K562 (cell line): ENCODE measurements at regions of chr1 and their contacts with region 1.

Region 1: DNA sequence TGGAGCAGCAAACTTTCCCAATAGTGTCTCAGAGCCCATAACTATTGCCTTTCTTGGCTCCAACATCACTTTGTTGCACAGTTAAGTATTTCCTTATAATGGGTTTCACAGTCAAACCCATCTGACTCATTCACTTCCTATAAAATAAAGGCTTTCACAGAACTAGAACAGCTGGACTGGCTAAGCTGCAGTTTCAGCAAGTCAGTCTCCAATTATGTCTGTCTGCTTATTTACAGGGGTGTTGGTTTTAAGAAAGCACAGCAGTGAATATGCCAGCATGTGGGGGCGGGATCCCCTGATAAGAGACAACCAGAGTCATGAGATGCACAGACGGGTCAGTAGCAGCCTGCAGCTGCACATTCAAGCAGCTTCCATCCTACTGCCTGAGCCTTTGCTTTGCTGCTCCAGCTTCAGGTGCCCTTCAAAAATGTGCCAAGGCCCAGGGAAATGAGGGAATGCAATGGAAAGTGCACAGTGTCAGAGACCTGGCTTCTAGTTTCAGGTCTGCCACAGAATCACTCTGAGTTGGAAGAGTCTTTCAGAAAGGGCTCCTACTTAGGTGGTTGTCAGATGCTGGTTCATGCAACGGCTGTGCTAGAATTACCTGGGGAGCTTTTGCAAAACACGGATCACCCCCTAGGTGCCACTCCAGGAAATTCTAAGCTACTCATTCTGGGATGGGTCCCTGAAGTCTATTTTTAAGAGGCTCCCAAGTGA is 24.8 kb downstream of the RNF19B start:
- DNase-seq: peak; percentile 35 to 83 (median 66)
- ATAC-seq: peak; percentile 92
- H3K4me3 ChIP-seq: no peak overlapping the region
- H3K27ac ChIP-seq: no peak overlapping the region
- H3K4me1 ChIP-seq: peaks cover 5 to 13% of the 10 kb centered on the region in 2 experiments; a peak in 4 of 5 replicates
- H3K27me3 ChIP-seq: no peaks in the 10 kb centered on the region
- CTCF ChIP-seq: no peak
- EP300 ChIP-seq: peak; percentile 64
- POLR2A ChIP-seq: no peak
- RAD21 ChIP-seq: peak in 1 of 2 experiments; percentile 20; a peak in 1 of 4 replicates

Region 2: GRCh38 chr1:32716312-32717148 is 223.3 kb before region 1 on chr1:
- CTCF ChIA-PET with region 1: no interaction called
- POLR2A ChIA-PET with region 1: no interaction called
- in situ Hi-C with region 1: no loop called
- intact Hi-C with region 1: no loop called
- DNase-seq: peak; percentile 95 to 97 (median 96)
- ATAC-seq: peak; percentile 96
- H3K4me3 ChIP-seq: no peak overlapping the region
- H3K27ac ChIP-seq: peak overlapping the region; percentile 68
- H3K4me1 ChIP-seq: peaks cover 18 to 49% of the 10 kb centered on the region in 2 experiments; a peak in 4 of 5 replicates
- H3K27me3 ChIP-seq: no peaks in the 10 kb centered on the region
- CTCF ChIP-seq: peak in 1 of 3 experiments; percentile 23; a peak in 2 of 6 replicates
- EP300 ChIP-seq: peak; percentile 52; the same call in 1 of the 2 replicates
- POLR2A ChIP-seq: no peak; the same call in 1 of the 2 replicates
- RAD21 ChIP-seq: peak in 1 of 2 experiments; percentile 22; a peak in 2 of 4 replicates

Region 3: DNA sequence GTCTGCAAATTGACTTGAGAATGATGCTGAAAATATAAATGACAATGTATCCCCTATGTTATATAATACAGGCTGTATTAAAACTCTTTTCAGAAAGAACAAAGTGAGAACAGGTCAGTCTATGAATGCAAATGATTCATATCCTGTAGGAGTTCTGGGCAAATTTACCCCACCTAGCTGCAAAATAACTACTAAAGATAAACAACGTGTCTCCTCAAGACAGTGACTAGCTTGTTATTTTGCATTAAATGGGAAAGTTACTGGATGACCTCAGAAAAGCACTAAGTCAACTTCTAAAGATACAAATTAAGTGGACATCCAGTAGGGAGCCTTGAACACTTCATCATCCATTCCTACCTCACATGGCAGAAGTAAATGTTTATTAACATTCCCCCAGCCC is 13.7 kb after region 1 on chr1:
- CTCF ChIA-PET with region 1: no interaction called
- POLR2A ChIA-PET with region 1: interaction called, 12 read pairs
- in situ Hi-C with region 1: no loop called
- intact Hi-C with region 1: no loop called
- DNase-seq: no peak
- ATAC-seq: no peak
- H3K4me3 ChIP-seq: no peak overlapping the region
- H3K27ac ChIP-seq: no peak overlapping the region
- H3K4me1 ChIP-seq: no peaks in the 10 kb centered on the region
- H3K27me3 ChIP-seq: no peaks in the 10 kb centered on the region
- CTCF ChIP-seq: no peak
- EP300 ChIP-seq: no peak
- POLR2A ChIP-seq: no peak
- RAD21 ChIP-seq: no peak

Region 4: DNA sequence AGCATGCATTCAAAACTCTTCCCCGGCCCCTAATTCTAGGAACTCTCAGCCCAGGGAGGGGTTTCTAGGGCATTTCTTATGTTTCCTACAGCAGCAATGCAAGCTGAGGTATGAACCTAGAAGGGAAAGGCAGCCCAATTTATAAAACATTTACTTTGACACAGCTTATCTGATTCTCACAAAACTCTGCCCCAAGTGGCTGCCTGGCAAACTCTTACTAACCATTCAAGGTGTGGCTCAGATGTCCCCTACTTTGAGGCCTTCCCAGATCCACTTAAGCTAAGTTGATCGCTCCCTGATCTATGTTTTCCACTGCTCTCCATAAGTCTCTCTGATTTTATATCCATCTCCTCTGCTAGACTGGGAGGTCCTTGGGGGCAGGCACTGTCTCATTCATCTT is 61.5 kb after region 1 on chr1:
- CTCF ChIA-PET with region 1: no interaction called
- POLR2A ChIA-PET with region 1: interaction called, 4 read pairs
- in situ Hi-C with region 1: loop called (anchors 5 kb)
- intact Hi-C with region 1: no loop called
- DNase-seq: peak in 2 of 4 experiments; percentile 52 to 53
- ATAC-seq: peak; percentile 49
- H3K4me3 ChIP-seq: no peak overlapping the region
- H3K27ac ChIP-seq: no peak overlapping the region
- H3K4me1 ChIP-seq: peaks cover 4 to 28% of the 10 kb centered on the region in 2 experiments
- H3K27me3 ChIP-seq: no peaks in the 10 kb centered on the region
- CTCF ChIP-seq: peak; percentile 21 to 49 (median 34); a peak in 5 of 6 replicates
- EP300 ChIP-seq: no peak
- POLR2A ChIP-seq: no peak
- RAD21 ChIP-seq: no peak